Endothelial cell of umbilical vein (primary cell): ENCODE measurements at regions of chr14 and their contacts with region 1.

Region 1: GRCh38 chr14:54665946-54666345 is 99.0 kb downstream of the SAMD4A start:
- DNase-seq: no peak
- H3K4me3 ChIP-seq: no peak overlapping the region
- H3K27ac ChIP-seq: peak overlapping the region; percentile 5
- H3K4me1 ChIP-seq: peaks cover 31% of the 10 kb centered on the region
- H3K27me3 ChIP-seq: no peaks in the 10 kb centered on the region
- CTCF ChIP-seq: no peak
- POLR2A ChIP-seq: no peak

Region 2: GRCh38 chr14:54676812-54677708 is 11.1 kb after region 1 on chr14:
- CTCF ChIA-PET with region 1: interaction called, 6 read pairs
- POLR2A ChIA-PET with region 1: interaction called, 4 read pairs
- dilution Hi-C with region 1: no loop called
- intact Hi-C with region 1: loop called (anchors 1 kb)
- DNase-seq: peak; percentile 96
- H3K4me3 ChIP-seq: peak overlapping the region in 1 of 3 experiments; percentile 55
- H3K27ac ChIP-seq: peak overlapping the region; percentile 95
- H3K4me1 ChIP-seq: peaks cover 33% of the 10 kb centered on the region
- H3K27me3 ChIP-seq: no peaks in the 10 kb centered on the region
- CTCF ChIP-seq: no peak
- POLR2A ChIP-seq: no peak

Region 3: GRCh38 chr14:54683882-54684794 is 18.2 kb after region 1 on chr14:
- CTCF ChIA-PET with region 1: no interaction called
- POLR2A ChIA-PET with region 1: no interaction called
- dilution Hi-C with region 1: no loop called
- intact Hi-C with region 1: loop called (anchors 1 kb)
- DNase-seq: peak; percentile 81
- H3K4me3 ChIP-seq: no peak overlapping the region
- H3K27ac ChIP-seq: peak overlapping the region; percentile 95
- H3K4me1 ChIP-seq: peaks cover 61% of the 10 kb centered on the region
- H3K27me3 ChIP-seq: no peaks in the 10 kb centered on the region
- CTCF ChIP-seq: no peak
- POLR2A ChIP-seq: no peak